Activated naive CD4-positive, alpha-beta T cell treated with anti-CD3 and anti-CD28 coated beads for 36 hours (primary cell): ENCODE measurements at regions of chr1 and their contacts with region 1.

Region 1: DNA sequence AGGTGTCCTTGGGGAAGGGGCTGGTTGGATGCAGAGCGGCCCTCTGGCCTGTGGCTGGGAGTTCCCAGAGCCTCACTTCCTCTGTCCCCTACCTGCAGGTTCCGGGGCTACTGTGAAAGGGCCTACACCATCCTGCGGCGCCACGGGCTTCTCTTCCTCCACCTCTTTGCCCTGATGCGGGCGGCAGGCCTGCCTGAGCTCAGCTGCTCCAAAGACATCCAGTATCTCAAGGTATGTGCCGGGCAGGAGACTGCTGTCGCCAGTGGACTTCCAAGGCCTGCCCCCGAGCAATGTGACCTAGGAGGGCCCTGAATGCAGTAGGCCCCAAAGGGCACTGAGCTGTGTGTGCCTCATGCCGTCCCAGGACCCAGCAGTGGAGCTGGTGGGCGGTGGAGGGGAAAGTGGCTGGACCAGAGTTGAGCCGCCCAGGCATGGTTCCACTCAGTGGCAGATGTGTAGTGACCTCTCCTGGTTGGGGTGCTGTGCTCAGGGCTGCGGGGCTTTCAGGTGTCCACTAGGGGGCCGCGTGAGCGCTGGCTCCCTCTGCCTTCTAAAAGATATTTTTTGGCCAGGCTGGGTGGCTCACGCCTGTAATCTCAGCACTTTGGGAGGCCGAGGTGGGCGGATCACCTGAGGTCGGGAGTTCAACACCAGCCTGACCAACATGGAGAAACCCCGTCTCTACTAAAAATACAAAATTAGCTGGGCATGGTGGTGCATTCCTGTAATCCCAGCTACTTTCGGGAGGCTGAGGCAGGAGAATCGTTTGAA is 73.4 kb downstream of the PIK3CD start:
- DNase-seq: peak; percentile 78
- H3K4me3 Mint-ChIP-seq: no peak overlapping the region
- H3K27ac Mint-ChIP-seq: no peak overlapping the region
- H3K4me1 Mint-ChIP-seq: peaks cover 64% of the 10 kb centered on the region
- H3K27me3 Mint-ChIP-seq: no peaks in the 10 kb centered on the region

Region 2: DNA sequence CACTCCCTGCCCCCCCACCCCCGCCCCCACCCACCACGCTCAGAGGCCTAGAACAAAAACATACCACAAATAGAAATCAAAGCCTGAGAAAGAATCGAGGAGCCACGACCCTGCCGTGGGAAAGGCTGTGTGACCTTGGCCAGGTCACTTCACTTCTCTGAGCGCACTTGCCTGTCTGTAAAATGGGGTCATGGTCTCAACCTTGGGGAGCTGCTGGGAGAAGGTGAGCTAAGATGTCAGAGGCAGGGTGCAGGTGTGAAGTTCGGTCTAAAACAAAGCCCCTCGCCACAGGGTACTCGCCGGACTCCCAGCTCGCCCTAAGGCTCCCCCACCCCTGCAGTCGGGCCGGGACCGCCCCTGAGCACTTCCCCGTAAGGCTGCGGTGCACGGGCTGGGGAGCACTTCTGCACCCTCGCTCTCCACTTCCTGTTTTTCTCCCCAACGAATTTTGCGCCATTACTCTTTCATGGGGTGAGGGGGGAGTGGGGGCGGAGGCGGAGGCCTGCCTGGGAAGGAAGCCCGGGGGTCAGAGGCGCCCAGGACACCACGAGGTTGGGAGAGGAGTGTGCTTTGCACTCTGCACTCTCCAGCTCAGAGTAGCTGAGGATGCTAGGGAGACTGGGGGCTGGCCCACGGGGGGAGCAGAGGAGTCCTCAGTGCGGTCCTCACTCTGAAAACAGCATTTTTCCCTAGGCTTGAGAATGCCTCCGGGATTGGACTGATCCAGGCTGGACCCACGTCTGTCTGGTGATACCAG is 95.3 kb before region 1 on chr1:
- CTCF ChIA-PET with region 1: interaction called, 134 read pairs
- intact Hi-C with region 1: loop called (anchors 1 kb)
- DNase-seq: peak; percentile 87
- H3K4me3 Mint-ChIP-seq: peak overlapping the region; percentile 85
- H3K27ac Mint-ChIP-seq: peak overlapping the region; percentile 93
- H3K4me1 Mint-ChIP-seq: peaks cover 67% of the 10 kb centered on the region
- H3K27me3 Mint-ChIP-seq: no peaks in the 10 kb centered on the region

Region 3: DNA sequence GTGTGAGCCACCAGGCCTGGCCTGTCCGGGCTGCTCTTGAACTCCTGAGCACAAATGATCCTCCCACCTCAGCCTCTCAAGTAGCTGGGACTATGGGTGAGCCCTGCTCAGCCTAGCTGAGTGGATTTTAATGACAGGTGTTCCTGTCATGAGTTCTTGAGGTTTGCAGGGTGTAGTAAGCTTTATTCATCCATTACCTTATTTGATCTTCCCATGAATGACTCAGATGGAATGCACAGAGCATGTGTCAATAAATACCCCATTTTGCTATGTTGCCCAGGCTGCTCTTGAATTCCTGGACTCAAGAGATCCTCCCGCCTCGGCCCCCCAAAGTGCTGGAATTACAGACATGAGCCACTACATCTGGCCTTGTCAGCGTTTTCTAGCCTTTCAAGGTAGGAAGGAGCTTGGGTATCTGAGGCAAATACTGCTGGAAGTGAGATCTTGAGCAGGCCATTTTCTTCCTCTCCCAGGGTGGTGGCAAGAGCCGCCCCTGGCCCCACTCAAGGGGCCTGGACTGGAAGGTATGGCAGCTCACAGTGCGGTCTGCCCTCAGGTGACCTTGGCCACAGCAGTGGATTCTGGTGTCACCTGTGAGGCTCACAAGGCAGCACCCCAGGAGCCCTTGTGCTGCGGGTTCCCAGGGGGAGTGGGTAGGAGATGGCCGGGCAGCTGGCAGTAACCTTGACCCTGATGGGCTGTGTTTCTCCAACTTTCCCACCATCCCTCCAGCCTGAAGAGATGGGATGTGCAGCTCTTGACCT is 53.3 kb before region 1 on chr1:
- CTCF ChIA-PET with region 1: interaction called, 4 read pairs
- intact Hi-C with region 1: loop called (anchors 1 kb)
- DNase-seq: peak; percentile 59
- H3K4me3 Mint-ChIP-seq: peak overlapping the region; percentile 24
- H3K27ac Mint-ChIP-seq: peak overlapping the region; percentile 86
- H3K4me1 Mint-ChIP-seq: peaks cover 77% of the 10 kb centered on the region
- H3K27me3 Mint-ChIP-seq: no peaks in the 10 kb centered on the region

Region 4: DNA sequence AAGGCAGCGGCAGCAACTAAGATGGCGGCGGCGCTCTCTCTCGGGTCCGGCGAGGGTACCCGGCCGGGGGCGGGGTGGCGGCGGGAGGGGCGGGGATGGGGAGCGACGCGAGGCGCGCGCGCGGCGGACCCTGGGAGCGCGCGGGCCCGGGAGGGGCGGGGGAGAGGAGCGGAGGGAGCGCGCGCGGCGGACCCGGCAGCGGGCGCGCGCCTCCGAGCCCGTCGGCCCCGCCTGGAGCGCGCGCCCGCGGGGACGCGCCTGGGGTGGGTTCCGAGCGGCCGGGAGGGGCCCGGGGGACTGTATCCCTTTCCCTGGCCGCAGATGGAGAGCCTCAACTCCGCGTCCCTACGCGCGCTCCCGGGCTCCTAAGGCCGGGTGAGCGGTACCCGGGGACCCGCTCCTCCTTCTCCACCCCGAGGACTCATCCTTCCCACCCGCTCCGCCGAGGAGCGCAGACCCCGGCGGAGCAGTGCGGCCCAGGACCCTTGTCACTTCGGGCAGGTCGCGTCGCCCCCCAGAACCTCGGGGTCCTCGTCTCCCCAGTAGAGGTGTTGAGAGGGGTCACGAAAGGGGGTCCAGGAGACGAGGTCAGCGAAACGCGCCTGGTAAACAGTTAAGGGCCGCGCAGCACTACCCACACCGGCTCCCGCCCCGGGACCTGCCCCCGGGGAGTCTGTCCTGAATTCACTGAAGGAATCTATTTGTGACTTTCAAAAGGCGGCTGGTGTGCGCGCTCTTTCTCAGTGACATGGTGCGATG is 99.2 kb after region 1 on chr1 and contains the start of gene CLSTN1:
- CTCF ChIA-PET with region 1: no interaction called
- intact Hi-C with region 1: loop called (anchors 2 kb)
- DNase-seq: peak; percentile 91
- H3K4me3 Mint-ChIP-seq: peak within 1 kb of the TSS; percentile 94
- H3K27ac Mint-ChIP-seq: peak within 1 kb of the TSS; percentile 8
- H3K4me1 Mint-ChIP-seq: peaks cover 41% of the 10 kb centered on the region
- H3K27me3 Mint-ChIP-seq: peaks cover 14% of the 10 kb centered on the region
- total RNA-seq, gene CLSTN1: 24.0 to 24.9 TPM

Region 5: DNA sequence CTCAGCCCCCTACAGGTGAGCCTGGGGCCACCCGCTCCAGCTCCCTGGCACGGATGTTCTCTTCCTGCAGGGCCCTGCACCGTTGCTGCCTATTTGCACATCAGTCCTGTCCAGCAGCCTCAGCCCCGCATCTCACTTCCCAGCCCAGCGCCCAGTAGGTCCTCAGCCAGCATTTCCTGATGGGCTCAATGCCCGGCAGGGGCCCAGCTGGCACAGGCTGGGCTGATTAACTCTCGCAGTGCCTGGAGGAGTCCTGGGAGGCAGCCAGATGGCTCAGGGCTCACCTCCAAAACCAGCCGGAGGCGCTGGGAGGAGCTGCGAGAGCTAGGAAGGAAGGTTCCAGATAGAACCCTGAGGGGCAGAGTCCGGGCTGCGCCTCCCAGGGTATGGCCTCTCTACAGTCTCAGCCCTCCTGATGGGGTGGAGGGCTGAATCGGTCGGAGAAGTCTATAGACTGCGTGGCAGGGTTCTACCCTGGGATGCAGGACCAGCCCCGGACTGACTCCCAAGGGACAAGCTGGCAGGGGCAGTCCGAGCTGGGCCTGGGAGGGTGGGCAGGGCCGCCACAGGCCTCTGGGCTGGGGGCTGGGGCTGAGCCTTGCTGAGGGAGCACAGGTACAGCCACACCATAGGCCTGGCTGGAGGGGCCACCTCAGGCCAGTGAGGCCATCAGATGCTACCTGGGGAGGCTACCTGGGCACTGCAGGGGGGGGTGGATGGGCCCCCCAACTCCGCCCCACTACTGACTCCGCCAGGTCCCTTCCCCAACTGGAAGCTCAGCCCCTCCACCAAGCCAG is 118.1 kb after region 1 on chr1:
- CTCF ChIA-PET with region 1: no interaction called
- intact Hi-C with region 1: no loop called
- DNase-seq: no peak
- H3K4me3 Mint-ChIP-seq: no peak overlapping the region
- H3K27ac Mint-ChIP-seq: no peak overlapping the region
- H3K4me1 Mint-ChIP-seq: no peaks in the 10 kb centered on the region
- H3K27me3 Mint-ChIP-seq: no peaks in the 10 kb centered on the region

Region 6: DNA sequence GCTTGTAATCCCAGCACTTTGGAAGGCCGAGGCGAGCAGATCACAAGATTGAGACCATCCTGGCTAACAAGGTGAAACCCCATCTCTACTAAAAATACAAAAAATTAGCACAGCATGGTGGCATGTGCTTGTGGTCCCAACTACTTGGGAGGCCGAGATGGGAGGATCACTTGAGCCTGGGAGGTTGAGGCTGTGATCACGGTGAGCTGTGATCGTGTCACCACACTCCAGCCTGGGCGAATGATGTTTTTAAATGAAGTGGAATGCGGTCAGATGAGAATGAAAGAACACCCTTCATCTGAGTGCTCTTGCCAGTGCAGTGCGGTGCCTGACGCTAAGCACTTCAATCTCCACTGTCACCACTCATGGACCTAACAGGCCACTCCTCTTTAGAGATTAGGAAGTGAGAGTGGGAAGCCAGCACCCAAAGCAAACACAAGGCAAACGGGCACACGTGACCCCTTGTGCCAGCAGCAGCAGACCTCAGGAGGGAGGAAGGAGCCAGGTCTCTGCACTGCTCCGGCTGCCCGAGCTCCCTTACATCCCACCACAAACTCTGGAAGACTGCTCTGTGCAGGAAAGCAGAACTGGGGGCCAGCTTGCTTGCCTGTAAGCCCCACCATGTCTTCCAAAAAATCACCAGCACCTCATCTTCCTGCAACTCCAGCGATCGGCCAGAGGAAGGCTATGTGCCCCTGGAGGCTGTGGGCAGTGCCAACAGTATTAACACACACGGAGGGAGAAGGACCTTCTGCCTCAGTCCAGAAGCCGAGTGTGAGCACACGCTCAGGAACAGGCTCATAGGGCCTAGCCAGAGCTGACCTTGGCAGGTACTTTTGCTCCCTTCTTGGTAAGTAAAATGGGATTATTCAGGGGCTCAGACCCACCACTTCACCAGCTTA is 175.5 kb after region 1 on chr1:
- CTCF ChIA-PET with region 1: no interaction called
- intact Hi-C with region 1: loop called (anchors 1 kb)
- DNase-seq: peak; percentile 13
- H3K4me3 Mint-ChIP-seq: peak overlapping the region; percentile 3
- H3K27ac Mint-ChIP-seq: no peak overlapping the region
- H3K4me1 Mint-ChIP-seq: peaks cover 39% of the 10 kb centered on the region
- H3K27me3 Mint-ChIP-seq: no peaks in the 10 kb centered on the region